PC-3 (cell line): ENCODE measurements at regions of chr9 and their contacts with region 1.

Region 1: DNA sequence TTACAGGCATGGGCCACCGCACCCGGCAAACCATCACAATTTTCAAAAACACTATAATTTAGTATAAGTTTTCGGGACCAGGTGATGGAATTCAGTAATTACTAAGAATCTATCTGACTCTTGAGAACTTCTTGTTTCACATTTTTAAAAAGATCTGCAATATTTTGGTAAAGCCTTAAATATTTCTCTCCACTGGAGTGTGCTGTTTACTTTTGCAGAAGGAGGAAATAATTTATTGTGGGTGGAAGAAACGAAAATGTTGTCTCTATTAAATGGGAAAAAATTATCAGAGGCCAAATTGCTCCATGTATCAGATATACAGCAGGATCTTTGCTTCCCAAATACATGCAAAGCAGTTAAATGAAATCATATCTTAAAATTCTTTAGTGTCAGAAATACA is 566.8 kb upstream of the CYLC2 start:
- DNase-seq: no peak
- ATAC-seq: no peak
- H3K4me3 ChIP-seq: no peak overlapping the region
- H3K27ac ChIP-seq: no peak overlapping the region
- H3K4me1 ChIP-seq: no peaks in the 10 kb centered on the region
- H3K27me3 ChIP-seq: no peaks in the 10 kb centered on the region
- CTCF ChIP-seq: peak; percentile 11; the same call in 1 of the 2 replicates

Region 2: DNA sequence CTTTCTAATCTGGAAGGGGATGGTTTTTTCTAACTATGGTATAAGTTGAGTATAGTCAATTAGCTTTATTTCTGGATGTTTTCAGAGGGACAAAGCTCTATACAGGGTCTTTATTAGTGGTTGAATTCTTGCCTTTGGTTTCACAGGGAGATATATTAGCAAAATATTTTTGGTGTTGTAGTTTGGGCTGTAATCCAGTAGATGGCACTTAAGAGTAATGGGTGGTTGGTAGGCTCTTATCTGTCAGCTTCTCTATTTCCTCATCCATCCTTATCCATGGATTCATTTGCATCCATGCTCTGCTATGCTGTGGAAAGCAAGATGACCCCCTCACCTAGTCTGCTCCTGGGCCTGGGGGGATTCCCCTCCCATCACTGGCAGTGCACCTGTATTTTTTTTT is 203.3 kb after region 1 on chr9:
- CTCF ChIA-PET with region 1: no interaction called
- POLR2A ChIA-PET with region 1: no interaction called
- intact Hi-C with region 1: loop called (anchors 10 kb)
- DNase-seq: peak; percentile 29
- ATAC-seq: no peak
- H3K4me3 ChIP-seq: no peak overlapping the region
- H3K27ac ChIP-seq: no peak overlapping the region
- H3K4me1 ChIP-seq: no peaks in the 10 kb centered on the region
- H3K27me3 ChIP-seq: no peaks in the 10 kb centered on the region
- CTCF ChIP-seq: peak; percentile 50; the same call in 1 of the 2 replicates